ENCODE measurements at regions of chr1 and their contacts with region 1.

Region 1: GRCh38 chr1:52365746-52366516 is at the start of gene CC2D1B:
- DNase-seq: peak; percentile 98
- ATAC-seq: peak; percentile 93
- H3K4me3 ChIP-seq: peak within 1 kb of the TSS; percentile 84
- H3K27ac ChIP-seq: peak within 1 kb of the TSS; percentile 70
- H3K4me1 ChIP-seq: peaks cover 20% of the 10 kb centered on the region
- H3K27me3 ChIP-seq: no peaks in the 10 kb centered on the region
- CTCF ChIP-seq: no peak
- total RNA-seq, gene CC2D1B: 26.0 and 26.8 TPM in 2 replicates

Region 2: DNA sequence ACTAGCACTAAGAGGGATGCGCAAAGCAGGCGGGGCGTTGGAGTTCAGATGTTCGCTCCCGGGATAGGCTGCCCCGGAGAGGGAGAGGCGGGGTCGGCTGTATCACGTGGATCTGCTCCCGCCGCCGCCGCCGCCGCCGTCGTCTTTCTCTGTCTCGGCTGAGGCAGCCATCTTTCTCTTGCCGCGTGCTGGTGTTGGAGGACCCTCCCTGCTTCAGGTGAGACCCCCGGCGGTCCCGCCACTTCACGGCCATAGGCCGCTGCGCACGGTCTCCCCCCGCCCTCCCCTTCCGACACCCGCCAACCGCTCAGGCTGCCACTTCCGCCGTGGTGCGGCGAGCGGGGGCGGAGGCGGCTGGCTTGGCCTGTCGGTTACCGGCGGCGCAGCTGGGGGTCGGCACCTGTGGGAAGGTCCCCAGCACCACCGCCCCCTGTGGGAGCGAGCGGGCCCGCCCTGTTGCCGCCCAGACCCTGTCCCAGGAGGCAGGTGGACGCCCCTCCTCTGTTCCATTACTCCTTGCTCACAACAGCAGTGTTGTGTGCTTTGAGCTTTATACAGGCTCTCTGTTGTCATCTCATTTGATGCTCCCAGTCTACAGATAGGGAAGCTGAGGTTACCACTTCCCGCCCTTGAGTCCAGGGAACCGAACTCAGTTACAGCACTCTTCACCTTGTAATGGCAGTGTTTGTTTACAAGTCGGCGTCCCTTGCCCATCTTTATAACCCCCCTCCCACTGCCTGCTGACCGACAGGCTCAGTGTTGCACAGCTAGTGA is 309.6 kb before region 1 on chr1 and contains the start of gene BTF3L4:
- CTCF ChIA-PET with region 1: no interaction called
- POLR2A ChIA-PET with region 1: interaction called, 4 read pairs
- intact Hi-C with region 1: loop called (anchors 5 kb)
- DNase-seq: peak; percentile 93
- ATAC-seq: peak; percentile 91
- H3K4me3 ChIP-seq: peak within 1 kb of the TSS; percentile 93
- H3K27ac ChIP-seq: peak within 1 kb of the TSS; percentile 60
- H3K4me1 ChIP-seq: peaks cover 33% of the 10 kb centered on the region
- H3K27me3 ChIP-seq: no peaks in the 10 kb centered on the region
- CTCF ChIP-seq: no peak
- total RNA-seq, gene BTF3L4: 33.8 and 50.4 TPM in 2 replicates

Region 3: DNA sequence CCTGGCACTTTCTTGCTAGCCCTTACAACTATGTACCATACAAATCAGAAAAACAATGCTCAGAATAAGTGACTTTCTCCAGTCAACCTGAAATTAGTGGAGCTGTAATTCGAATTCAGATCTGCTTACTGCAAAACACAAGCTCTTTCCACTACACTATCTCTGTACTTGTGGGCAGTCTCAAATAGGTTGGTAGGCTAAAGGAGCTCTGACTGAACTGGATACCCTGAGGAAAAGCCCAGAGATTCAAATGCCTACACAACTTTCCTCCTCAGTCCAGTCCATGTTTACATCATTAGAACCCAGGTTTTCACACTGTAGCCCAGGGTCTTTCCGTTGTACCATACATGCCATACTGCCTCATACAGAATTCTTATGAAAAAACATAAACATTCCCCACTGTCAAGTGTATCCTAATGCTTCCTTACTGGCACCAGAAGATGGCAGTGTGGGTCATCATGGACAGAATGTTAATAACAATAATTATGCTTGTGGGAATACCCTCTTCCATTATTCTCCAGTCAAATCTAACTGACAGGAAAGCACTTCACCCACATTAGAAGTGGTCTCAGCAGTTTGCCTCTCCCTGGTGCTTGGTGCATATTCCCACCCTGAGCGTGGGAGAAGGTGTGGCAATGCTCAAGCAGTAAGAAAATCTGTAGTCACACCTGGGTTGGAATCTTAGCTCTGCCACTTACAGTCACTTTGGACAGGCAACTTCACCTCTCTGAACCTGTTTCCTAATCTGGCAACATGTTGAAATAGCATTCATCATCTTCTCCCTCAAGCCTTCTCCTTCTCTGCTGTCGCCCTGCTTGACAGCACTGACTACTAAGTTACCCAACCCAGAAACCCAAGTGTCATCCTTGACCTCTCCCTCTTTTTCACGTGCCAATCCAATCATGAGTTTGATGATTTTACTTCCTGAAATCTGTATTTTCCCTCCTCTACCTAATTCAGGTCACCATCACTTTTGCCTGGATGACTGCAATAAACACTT is 238.4 kb before region 1 on chr1:
- CTCF ChIA-PET with region 1: no interaction called
- POLR2A ChIA-PET with region 1: no interaction called
- intact Hi-C with region 1: loop called (anchors 5 kb)
- DNase-seq: peak; percentile 71
- ATAC-seq: peak; percentile 99
- H3K4me3 ChIP-seq: no peak overlapping the region
- H3K27ac ChIP-seq: no peak overlapping the region
- H3K4me1 ChIP-seq: no peaks in the 10 kb centered on the region
- H3K27me3 ChIP-seq: peaks cover 4% of the 10 kb centered on the region; the same call in 1 of the 2 replicates
- CTCF ChIP-seq: peak; percentile 86

Region 4: DNA sequence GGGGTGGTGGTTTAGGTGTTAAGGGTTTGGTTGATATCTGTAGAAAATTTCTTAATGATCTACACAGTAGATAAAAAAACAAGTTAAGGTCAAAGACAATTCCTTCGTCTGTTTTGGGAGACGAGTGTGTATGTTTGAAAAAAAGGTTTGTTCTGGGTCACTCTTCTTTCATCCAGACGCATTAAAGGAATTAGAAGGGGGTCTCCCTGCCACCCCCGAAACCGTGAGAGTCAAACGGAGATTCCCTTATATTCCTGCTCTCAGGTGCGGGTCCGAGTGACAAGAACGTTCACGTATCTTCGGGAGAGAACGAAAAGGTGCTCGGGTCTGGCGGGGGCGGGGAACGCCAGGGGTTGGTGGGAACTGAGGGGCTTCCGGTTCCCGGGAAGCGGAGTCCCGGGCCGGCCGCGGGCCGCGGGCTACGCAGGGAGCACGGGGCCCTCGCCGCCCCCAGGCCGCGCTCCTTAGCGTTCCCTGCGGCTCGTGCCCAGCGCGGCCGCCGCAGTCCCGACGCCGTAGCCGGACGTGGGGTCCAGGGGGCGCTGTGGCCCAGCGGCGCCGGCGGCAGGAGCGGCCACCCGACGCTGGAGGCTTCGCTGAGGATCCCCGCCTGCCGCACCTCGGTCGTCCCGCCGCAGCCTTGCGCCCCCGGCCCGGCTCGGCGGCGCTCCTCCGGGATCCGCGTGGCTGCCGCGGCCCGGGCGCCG is 224.3 kb before region 1 on chr1 and contains the start of gene ZFYVE9:
- CTCF ChIA-PET with region 1: no interaction called
- POLR2A ChIA-PET with region 1: no interaction called
- intact Hi-C with region 1: loop called (anchors 5 kb)
- DNase-seq: peak; percentile 87
- ATAC-seq: peak; percentile 81
- H3K4me3 ChIP-seq: peak within 1 kb of the TSS; percentile 90
- H3K27ac ChIP-seq: peak within 1 kb of the TSS; percentile 30
- H3K4me1 ChIP-seq: peaks cover 30% of the 10 kb centered on the region
- H3K27me3 ChIP-seq: no peaks in the 10 kb centered on the region
- CTCF ChIP-seq: peak; percentile 52
- total RNA-seq, gene ZFYVE9: 14.2 and 16.6 TPM in 2 replicates

Region 5: DNA sequence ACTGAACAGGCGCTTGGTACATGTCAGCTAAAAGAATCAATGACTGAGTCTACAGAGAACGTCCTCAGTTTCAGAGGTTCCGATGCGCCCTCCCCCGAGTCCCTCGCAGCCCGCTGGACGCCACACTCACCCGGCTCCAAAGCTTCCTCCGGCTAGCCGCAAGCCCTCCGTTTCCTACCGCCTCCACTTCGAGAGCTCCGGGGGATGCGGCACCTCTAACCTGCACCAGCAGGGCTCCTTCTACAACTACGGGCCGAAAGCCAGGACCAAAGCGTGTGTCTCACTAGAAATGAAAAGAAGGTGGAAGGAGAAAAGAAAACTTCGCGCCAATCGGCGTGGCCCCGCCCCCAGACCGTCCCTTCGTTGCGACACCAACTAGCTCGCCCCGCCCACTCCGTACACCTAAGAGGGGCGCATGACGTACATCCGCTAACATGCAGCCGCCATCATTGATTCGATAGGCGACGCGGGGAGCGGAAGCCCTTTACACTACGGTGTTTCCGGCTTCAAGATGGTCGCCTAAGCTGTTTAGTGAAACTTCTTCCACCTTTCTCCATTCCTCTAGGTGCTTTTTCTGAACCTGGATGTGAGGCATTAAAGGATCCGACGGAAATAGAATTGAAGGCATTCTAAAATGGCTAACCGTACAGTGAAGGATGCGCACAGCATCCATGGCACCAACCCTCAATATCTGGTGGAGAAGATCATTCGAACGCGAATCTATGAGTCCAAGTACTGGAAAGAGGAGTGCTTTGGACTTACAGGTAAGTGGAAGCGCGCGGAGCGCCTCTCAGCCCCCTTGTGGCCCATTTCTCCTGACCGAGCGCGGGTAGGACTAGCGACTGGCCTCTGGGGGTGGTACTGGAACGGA is 38.4 kb after region 1 on chr1 and contains the starts of genes ORC1 and PRPF38A:
- CTCF ChIA-PET with region 1: interaction called, 8 read pairs
- POLR2A ChIA-PET with region 1: no interaction called
- intact Hi-C with region 1: loop called (anchors 1 kb)
- DNase-seq: peak; percentile 97
- ATAC-seq: peak; percentile 83
- H3K4me3 ChIP-seq: peak within 1 kb of the TSS; percentile 85
- H3K27ac ChIP-seq: peak within 1 kb of the TSS; percentile 76
- H3K4me1 ChIP-seq: peaks cover 35% of the 10 kb centered on the region
- H3K27me3 ChIP-seq: no peaks in the 10 kb centered on the region
- CTCF ChIP-seq: peak; percentile 57
- total RNA-seq, gene ORC1: 23.7 and 28.9 TPM in 2 replicates
- total RNA-seq, gene PRPF38A: 14.5 and 15.2 TPM in 2 replicates

Region 6: DNA sequence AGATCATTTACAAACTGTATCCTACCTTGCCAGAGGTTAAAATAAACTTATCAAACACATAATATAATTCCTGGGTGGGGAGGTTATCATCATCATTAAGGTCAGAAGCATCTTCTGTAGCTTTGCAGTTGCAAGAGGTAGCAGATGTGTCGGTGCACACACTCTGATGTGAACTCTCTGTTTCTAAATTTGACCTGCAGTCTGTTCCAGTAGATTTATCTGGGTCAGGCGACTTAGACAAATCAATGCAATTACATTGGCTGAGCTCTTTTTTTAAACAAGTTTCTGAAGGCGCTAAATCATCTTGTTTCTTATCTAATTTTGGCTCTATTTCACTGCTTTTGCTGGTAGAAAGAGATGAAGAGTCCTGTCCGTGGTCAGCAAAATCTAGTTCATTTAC is 108.9 kb after region 1 on chr1:
- CTCF ChIA-PET with region 1: no interaction called
- POLR2A ChIA-PET with region 1: interaction called, 13 read pairs
- intact Hi-C with region 1: no loop called
- DNase-seq: no peak
- ATAC-seq: no peak
- H3K4me3 ChIP-seq: no peak overlapping the region
- H3K27ac ChIP-seq: no peak overlapping the region
- H3K4me1 ChIP-seq: no peaks in the 10 kb centered on the region
- H3K27me3 ChIP-seq: no peaks in the 10 kb centered on the region
- CTCF ChIP-seq: no peak

Region 7: GRCh38 chr1:52511851-52512615 is 146.1 kb after region 1 on chr1:
- CTCF ChIA-PET with region 1: no interaction called
- POLR2A ChIA-PET with region 1: no interaction called
- intact Hi-C with region 1: no loop called
- DNase-seq: no peak
- ATAC-seq: no peak
- H3K4me3 ChIP-seq: no peak overlapping the region
- H3K27ac ChIP-seq: no peak overlapping the region
- H3K4me1 ChIP-seq: no peaks in the 10 kb centered on the region
- H3K27me3 ChIP-seq: no peaks in the 10 kb centered on the region
- CTCF ChIP-seq: no peak

Region 8: GRCh38 chr1:52880206-52880605 is 514.3 kb after region 1 on chr1:
- CTCF ChIA-PET with region 1: no interaction called
- POLR2A ChIA-PET with region 1: interaction called, 10 read pairs
- intact Hi-C with region 1: no loop called
- DNase-seq: peak; percentile 10
- ATAC-seq: peak; percentile 88
- H3K4me3 ChIP-seq: no peak overlapping the region
- H3K27ac ChIP-seq: no peak overlapping the region
- H3K4me1 ChIP-seq: no peaks in the 10 kb centered on the region
- H3K27me3 ChIP-seq: no peaks in the 10 kb centered on the region
- CTCF ChIP-seq: no peak

Region 9: GRCh38 chr1:53393325-53393792 is 1027.4 kb after region 1 on chr1:
- CTCF ChIA-PET with region 1: no interaction called
- POLR2A ChIA-PET with region 1: no interaction called
- intact Hi-C with region 1: no loop called
- DNase-seq: peak; percentile 82
- ATAC-seq: peak; percentile 93
- H3K4me3 ChIP-seq: no peak overlapping the region
- H3K27ac ChIP-seq: no peak overlapping the region
- H3K4me1 ChIP-seq: no peaks in the 10 kb centered on the region
- H3K27me3 ChIP-seq: peaks cover 18% of the 10 kb centered on the region
- CTCF ChIP-seq: peak; percentile 95

Measured in PC-3 (cell line).